OCI-LY7 (cell line): ENCODE measurements at regions of chr10 and their contacts with region 1.

Region 1: DNA sequence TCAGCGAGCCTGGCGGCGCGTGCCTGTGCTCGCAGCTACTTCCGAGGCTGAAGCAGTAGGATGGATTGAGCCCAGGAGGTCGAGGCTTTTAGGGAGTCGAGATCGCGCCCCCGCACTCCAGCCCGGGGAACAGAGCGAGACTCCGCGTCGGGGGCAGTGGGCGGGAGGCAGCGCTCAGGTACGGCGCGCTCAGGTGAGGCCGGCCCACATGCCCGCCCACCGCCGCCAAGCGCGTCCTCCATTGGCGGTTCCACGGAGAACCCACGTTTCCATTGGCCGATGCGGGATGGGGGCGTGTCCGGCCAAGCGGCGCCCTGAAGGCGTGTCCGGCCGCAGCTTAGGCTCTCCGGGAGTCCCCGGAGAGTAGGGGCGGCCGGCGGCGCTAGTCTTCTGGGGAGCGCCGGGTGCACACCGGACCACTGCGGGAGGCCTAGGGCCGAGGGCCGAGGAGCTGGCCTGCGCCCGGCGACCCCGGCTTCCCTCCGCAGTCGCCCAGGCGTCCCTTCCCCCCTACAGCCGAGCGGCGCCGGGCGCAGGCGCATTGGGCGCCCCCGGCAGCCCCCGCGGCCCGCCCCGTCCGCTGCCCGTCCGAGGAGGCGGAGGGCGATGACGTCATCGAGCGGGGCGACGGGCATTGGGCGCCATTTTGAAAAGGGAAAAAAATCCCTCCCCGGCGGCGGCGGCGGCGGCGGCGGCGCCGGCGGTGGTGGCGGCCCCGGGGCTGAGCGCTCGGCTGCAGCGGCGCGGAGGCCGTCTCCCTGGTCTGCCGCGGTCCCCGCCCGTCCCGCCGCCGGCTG is at the start of gene PPP2R2D:
- DNase-seq: peak; percentile 95
- H3K4me3 ChIP-seq: peak within 1 kb of the TSS; percentile 93
- H3K27ac ChIP-seq: peak within 1 kb of the TSS; percentile 57
- H3K4me1 ChIP-seq: peaks cover 43% of the 10 kb centered on the region
- CTCF ChIP-seq: no peak
- total RNA-seq, gene PPP2R2D: 36.2 and 38.5 TPM in 2 replicates

Region 2: DNA sequence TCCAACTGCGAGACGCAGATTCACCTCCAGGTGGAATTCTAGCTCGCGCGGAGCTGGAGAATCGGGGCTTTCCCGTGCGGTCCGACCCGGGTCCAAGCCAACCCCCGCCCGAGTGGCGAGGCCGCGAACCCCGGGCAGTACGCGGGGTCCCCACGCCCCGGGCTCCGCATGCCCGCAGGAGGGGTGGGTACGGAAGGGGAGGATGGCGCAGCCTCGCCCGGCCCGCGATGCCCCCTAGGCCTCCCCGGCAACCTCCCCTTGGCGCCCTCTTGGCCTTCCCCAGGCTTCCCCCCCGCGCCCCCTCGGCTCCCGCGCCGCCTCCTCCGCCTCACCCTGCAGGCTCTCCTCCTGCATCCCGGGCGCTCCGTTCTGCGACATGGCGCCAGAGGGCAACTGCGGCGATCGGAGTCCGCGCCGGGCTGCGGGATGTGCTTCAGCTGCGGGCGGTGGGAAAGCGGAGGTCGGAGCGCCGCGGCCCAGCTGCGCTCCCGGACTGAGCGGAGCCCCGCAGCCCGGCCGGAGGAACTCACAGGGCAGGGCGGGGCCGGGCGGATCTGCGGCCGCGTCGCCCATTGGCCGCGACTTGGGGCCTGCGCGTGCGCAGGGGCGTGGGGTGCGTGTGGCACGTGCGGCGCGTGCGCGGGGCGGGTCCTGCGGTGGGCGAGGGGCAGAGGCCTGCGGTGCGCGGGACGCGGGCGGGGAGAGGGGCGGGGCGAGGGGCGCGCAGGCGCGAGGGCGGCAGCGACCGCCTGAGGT is 81.1 kb after region 1 on chr10 and contains the start of gene BNIP3:
- CTCF ChIA-PET with region 1: no interaction called
- POLR2A ChIA-PET with region 1: no interaction called
- intact Hi-C with region 1: loop called (anchors 1 kb)
- DNase-seq: peak; percentile 95
- H3K4me3 ChIP-seq: peak within 1 kb of the TSS; percentile 83
- H3K27ac ChIP-seq: no peak within 1 kb of the TSS
- H3K4me1 ChIP-seq: peaks cover 28% of the 10 kb centered on the region
- CTCF ChIP-seq: no peak
- total RNA-seq, gene BNIP3: 60.1 and 66.6 TPM in 2 replicates

Region 3: DNA sequence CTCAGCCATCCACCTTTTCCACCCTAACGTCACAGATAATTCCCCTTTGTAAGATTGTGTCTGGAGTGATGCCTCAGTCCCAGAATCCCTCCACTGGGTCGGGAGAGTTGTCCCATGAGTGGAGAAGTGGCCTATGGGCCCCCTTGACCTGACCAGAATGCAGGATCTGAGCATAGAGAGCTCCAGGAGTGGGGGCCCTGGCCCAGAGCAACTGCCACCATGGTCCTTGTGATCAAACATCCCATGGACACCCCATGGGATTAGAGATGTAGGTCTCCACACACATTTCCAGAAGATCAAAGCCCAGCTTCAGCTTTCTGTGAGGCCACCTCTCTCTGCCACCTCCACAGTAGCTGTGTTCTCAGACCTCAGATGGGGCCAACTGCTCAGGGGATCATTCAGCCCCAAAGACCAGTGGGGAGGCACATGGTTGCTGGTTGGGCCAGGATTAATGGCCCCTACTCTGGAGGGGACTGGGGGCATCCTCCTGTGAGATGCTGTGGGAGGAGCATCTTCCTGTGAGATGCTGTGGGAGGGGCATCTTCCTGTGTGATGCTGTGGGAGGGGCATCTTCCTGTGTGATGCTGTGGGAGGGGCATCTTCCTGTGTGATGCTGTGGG is 257.7 kb after region 1 on chr10:
- CTCF ChIA-PET with region 1: no interaction called
- POLR2A ChIA-PET with region 1: no interaction called
- intact Hi-C with region 1: loop called (anchors 10 kb)
- DNase-seq: peak; percentile 81
- H3K4me3 ChIP-seq: no peak overlapping the region
- H3K27ac ChIP-seq: peak overlapping the region; percentile 39
- H3K4me1 ChIP-seq: peaks cover 41% of the 10 kb centered on the region
- CTCF ChIP-seq: no peak

Region 4: DNA sequence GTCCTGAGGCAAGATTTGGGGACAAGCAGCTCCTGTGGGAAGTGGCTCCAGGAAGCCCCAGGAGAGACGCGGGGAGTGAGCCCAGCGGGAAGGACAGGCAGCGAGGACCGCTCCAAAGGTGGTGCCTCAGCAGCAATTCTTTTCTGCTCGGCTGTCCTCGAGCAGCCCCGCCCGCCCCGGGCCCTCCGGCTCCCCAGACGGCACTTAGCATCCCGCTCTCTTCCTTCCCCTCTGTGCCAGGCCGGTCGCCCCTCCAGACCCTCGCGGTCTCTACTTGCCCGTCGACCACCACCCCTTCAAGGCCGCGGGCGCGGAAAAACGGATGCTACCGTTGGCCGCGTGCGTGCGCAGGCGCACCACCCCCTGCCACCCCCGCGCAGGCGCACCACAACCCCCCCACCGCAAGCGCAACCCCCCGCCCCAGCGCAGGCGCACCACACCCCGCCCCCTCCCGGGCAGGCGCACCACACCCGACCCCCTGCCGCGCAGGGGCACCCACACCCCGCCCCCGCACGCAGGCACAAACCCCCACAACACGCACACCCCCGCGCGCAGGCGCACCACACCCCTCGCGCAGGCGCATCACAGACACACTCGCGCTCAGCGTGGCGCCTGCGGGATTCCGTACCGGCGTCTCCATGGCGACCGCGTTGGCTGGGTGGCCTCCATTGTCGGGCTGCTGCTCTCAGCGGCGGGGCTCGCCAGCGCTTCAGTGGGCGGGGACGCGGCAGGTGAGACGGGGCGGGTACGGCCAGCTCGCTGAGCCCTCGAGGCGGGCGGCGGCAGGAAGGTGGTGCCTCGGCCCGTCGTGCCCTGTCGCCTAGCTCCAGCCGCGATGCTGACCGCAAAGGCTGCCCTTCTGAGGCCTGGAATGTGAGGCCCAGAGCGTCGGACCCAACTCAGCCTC is 431.2 kb after region 1 on chr10 and contains the start of gene LRRC27:
- CTCF ChIA-PET with region 1: no interaction called
- POLR2A ChIA-PET with region 1: no interaction called
- intact Hi-C with region 1: loop called (anchors 5 kb)
- DNase-seq: peak; percentile 98
- H3K4me3 ChIP-seq: peak within 1 kb of the TSS; percentile 85
- H3K27ac ChIP-seq: peak within 1 kb of the TSS; percentile 76
- H3K4me1 ChIP-seq: peaks cover 53% of the 10 kb centered on the region
- CTCF ChIP-seq: no peak
- total RNA-seq, gene LRRC27: 10.0 and 13.0 TPM in 2 replicates